OCI-LY7 (cell line): ENCODE measurements at regions of chr6 and their contacts with region 1.

Region 1: GRCh38 chr6:82217018-82217586 is 30.4 kb downstream of the IBTK start:
- DNase-seq: no peak
- H3K4me3 ChIP-seq: no peak overlapping the region
- H3K27ac ChIP-seq: no peak overlapping the region
- H3K4me1 ChIP-seq: no peaks in the 10 kb centered on the region
- CTCF ChIP-seq: no peak

Region 2: DNA sequence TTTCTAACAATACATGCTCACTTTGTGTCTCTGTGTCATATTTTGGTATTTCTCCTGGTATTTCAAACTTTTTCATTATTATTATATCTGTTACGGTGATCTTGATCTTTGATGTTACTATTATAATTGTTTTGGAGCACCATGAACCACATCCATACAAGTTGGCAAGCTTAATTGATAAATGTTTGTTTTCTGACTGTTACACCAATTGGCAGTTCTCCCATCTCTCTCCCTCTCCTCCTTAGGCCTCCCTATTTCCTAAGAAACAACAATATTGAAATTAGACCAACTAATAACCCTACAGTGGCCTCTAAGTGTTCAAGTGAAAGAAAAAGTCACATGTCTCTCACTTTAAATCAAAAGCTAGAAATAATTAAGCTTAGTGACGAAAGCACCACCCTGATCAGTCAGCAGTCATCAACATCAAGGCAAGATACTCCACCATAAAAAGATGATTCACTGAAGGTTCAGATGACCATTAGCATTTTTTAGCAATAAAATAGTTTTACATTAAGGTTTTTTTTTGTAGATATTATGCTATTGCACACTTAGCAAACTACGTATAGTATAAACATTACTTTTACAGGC is 31.1 kb before region 1 on chr6:
- CTCF ChIA-PET with region 1: no interaction called
- POLR2A ChIA-PET with region 1: no interaction called
- intact Hi-C with region 1: loop called (anchors 5 kb)
- DNase-seq: no peak
- H3K4me3 ChIP-seq: no peak overlapping the region
- H3K27ac ChIP-seq: no peak overlapping the region
- H3K4me1 ChIP-seq: no peaks in the 10 kb centered on the region
- CTCF ChIP-seq: no peak

Region 3: DNA sequence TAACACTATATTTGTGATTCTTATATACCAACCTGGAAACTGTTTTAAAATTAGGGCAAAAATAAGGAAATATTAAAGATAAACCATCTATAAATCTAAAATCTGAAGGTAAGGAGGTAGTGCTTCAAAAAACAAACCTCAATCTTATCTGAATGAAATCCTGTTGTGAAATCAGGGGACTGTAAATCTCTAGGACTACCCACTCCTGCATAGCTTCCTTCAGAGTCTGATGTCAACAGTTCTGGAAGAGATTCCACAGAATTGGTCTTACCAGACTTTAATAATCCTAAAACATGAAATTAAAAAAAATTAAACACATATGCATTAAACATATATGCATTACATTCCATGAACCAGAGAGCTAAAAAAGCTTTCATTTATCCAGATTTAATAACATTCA is 20.9 kb before region 1 on chr6:
- CTCF ChIA-PET with region 1: no interaction called
- POLR2A ChIA-PET with region 1: interaction called, 10 read pairs
- intact Hi-C with region 1: no loop called
- DNase-seq: no peak
- H3K4me3 ChIP-seq: no peak overlapping the region
- H3K27ac ChIP-seq: no peak overlapping the region
- H3K4me1 ChIP-seq: no peaks in the 10 kb centered on the region
- CTCF ChIP-seq: no peak

Region 4: GRCh38 chr6:82205930-82206392 is 11.1 kb before region 1 on chr6:
- CTCF ChIA-PET with region 1: no interaction called
- POLR2A ChIA-PET with region 1: no interaction called
- intact Hi-C with region 1: loop called (anchors 1 kb)
- DNase-seq: no peak
- H3K4me3 ChIP-seq: no peak overlapping the region
- H3K27ac ChIP-seq: no peak overlapping the region
- H3K4me1 ChIP-seq: no peaks in the 10 kb centered on the region
- CTCF ChIP-seq: no peak

Region 5: DNA sequence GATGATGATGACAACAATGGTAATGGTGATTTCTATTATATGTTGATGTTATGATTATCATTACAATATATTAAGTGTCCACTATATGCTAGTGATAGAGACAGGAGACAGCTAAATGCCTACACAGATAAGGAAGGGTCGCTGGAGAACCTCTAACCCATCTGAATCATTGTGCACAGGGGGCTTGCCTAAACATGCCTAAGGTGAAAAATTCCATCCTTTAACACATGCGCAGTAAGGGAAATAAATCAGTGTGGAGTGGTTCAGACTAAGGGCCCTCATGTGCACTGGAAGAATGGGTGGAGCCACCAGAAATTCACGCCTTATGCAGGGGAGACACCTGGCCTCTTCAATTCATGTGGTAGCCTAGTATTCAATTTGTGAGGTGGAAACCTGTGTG is 266.9 kb after region 1 on chr6:
- CTCF ChIA-PET with region 1: no interaction called
- POLR2A ChIA-PET with region 1: no interaction called
- intact Hi-C with region 1: no loop called
- DNase-seq: no peak
- H3K4me3 ChIP-seq: no peak overlapping the region
- H3K27ac ChIP-seq: no peak overlapping the region
- H3K4me1 ChIP-seq: no peaks in the 10 kb centered on the region
- CTCF ChIP-seq: no peak